ENCODE measurements at regions of chr5 and their contacts with region 1.

Region 1: DNA sequence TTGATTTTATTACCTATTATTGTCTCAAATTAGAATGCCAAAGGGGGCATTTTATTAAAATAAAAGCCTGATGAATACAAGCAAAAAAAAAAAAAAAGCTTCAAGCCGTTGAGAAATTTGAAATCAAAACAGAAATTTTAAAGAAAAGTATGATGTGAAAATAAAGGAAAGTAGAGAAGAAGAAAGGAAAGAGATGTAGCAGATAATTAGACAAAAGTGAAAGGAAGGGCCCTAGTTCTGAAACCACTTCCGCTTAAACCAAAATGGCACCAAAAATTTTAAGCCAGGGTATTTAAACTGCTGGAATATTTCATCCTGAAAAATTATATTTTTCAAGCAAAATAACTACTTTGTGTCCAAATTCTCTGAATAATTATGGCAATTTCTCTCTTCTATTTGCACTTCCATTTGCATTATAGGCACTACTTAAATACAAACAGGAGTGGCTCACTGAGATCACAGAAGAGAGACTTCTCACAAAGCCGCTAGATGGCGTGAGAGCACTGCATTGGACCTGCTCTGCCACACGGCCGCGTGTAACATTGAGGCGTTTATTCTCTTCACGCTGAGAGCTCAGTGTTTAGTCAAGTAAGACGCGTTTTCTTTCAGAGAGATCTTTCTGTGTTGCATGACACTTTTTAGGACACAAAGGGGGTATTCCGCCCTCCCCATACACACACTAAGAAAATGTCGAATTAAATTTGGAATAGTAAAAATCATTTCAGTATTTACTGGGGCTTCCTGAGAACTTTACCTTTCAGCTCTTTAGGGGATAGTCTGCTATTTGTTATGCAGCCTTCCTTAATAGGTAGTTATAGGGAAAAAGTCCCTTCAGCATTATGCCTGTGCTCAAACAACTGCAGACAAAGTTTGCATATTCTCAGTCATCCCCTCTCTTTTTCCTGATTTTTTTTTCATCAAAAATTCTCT is 368.4 kb upstream of the CCNH start:
- DNase-seq: peak; percentile 70
- ATAC-seq: peak; percentile 100
- H3K4me3 ChIP-seq: no peak overlapping the region
- H3K27ac ChIP-seq: no peak overlapping the region
- H3K4me1 ChIP-seq: no peaks in the 10 kb centered on the region
- H3K27me3 ChIP-seq: peaks cover 0 to 1% of the 10 kb centered on the region in 2 experiments; a peak in 1 of 5 replicates
- CTCF ChIP-seq: peak; percentile 94
- EP300 ChIP-seq: no peak
- POLR2A ChIP-seq: no peak
- RAD21 ChIP-seq: peak; percentile 84

Region 2: DNA sequence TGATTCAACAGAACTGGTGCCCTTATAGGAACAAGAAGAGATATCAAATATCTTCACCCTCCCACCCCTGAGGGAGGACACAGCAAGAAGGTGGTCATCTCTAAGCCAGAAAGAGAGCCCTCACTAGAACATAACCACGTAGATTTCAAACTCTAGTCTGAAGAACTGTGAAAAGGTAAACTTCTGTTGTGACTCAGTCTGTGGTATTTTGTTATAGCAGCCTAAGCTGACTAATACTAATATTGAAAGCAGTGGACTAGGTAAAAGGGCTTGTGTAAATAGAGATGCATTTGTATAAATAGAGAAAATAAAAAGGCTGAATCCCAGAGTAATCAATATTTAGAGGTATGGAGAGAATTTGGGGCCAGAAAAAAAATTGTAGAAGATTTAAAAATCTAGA is 210.7 kb before region 1 on chr5:
- CTCF ChIA-PET with region 1: no interaction called
- POLR2A ChIA-PET with region 1: no interaction called
- in situ Hi-C with region 1: no loop called
- intact Hi-C with region 1: no loop called
- DNase-seq: no peak
- ATAC-seq: no peak
- H3K4me3 ChIP-seq: no peak overlapping the region
- H3K27ac ChIP-seq: no peak overlapping the region
- H3K4me1 ChIP-seq: no peaks in the 10 kb centered on the region
- H3K27me3 ChIP-seq: no peaks in the 10 kb centered on the region; a peak in 1 of 5 replicates
- CTCF ChIP-seq: no peak
- EP300 ChIP-seq: no peak
- POLR2A ChIP-seq: no peak
- RAD21 ChIP-seq: no peak

Region 3: DNA sequence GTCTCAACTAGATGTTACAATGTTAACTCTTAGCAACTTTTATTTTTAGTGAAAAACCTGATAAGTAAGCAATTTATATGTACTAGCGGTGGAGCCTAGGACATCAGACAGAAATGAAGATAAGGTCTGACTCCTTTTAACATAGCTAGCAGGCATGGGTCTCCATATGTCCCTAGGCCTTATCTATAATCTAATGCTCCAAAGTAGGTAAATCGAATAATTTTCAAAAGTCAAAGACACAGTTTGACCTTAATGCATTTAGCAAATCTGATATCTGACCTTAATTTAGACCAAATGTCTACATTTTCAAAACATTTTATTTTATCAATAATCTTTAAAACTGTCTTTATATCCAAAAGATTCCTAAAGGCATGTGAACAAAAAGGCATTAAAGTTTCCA is 63.3 kb before region 1 on chr5:
- CTCF ChIA-PET with region 1: no interaction called
- POLR2A ChIA-PET with region 1: no interaction called
- in situ Hi-C with region 1: no loop called
- intact Hi-C with region 1: no loop called
- DNase-seq: no peak
- ATAC-seq: no peak
- H3K4me3 ChIP-seq: no peak overlapping the region
- H3K27ac ChIP-seq: no peak overlapping the region
- H3K4me1 ChIP-seq: no peaks in the 10 kb centered on the region
- H3K27me3 ChIP-seq: no peaks in the 10 kb centered on the region
- CTCF ChIP-seq: no peak
- EP300 ChIP-seq: no peak
- POLR2A ChIP-seq: no peak
- RAD21 ChIP-seq: no peak

Region 4: GRCh38 chr5:87807783-87808182 is 26.7 kb after region 1 on chr5:
- CTCF ChIA-PET with region 1: no interaction called
- POLR2A ChIA-PET with region 1: no interaction called
- in situ Hi-C with region 1: no loop called
- intact Hi-C with region 1: no loop called
- DNase-seq: no peak
- ATAC-seq: no peak
- H3K4me3 ChIP-seq: no peak overlapping the region
- H3K27ac ChIP-seq: no peak overlapping the region
- H3K4me1 ChIP-seq: no peaks in the 10 kb centered on the region
- H3K27me3 ChIP-seq: no peaks in the 10 kb centered on the region
- CTCF ChIP-seq: no peak
- EP300 ChIP-seq: no peak
- POLR2A ChIP-seq: no peak
- RAD21 ChIP-seq: no peak

Region 5: GRCh38 chr5:88190139-88190834 is 409.2 kb after region 1 on chr5:
- CTCF ChIA-PET with region 1: no interaction called
- POLR2A ChIA-PET with region 1: no interaction called
- in situ Hi-C with region 1: no loop called
- intact Hi-C with region 1: loop called (anchors 1 kb)
- DNase-seq: no peak
- ATAC-seq: no peak
- H3K4me3 ChIP-seq: no peak overlapping the region
- H3K27ac ChIP-seq: no peak overlapping the region
- H3K4me1 ChIP-seq: no peaks in the 10 kb centered on the region
- H3K27me3 ChIP-seq: no peaks in the 10 kb centered on the region
- CTCF ChIP-seq: peak; percentile 42
- EP300 ChIP-seq: no peak
- POLR2A ChIP-seq: no peak
- RAD21 ChIP-seq: no peak

Region 6: GRCh38 chr5:88680253-88681132 is 899.4 kb after region 1 on chr5:
- CTCF ChIA-PET with region 1: interaction called, 28 read pairs
- POLR2A ChIA-PET with region 1: no interaction called
- in situ Hi-C with region 1: loop called (anchors 5 kb)
- intact Hi-C with region 1: loop called (anchors 1 kb)
- DNase-seq: peak; percentile 13
- ATAC-seq: peak; percentile 97
- H3K4me3 ChIP-seq: peak overlapping the region; percentile 19 to 53 (median 40); a peak in 3 of 6 replicates
- H3K27ac ChIP-seq: no peak overlapping the region
- H3K4me1 ChIP-seq: no peaks in the 10 kb centered on the region
- H3K27me3 ChIP-seq: peaks cover 2 to 74% of the 10 kb centered on the region in 2 experiments; a peak in 4 of 5 replicates
- CTCF ChIP-seq: peak; percentile 93
- EP300 ChIP-seq: no peak
- POLR2A ChIP-seq: no peak
- RAD21 ChIP-seq: peak; percentile 94

Region 7: GRCh38 chr5:88690409-88691229 is 909.5 kb after region 1 on chr5:
- CTCF ChIA-PET with region 1: interaction called, 32 read pairs
- POLR2A ChIA-PET with region 1: no interaction called
- in situ Hi-C with region 1: loop called (anchors 5 kb)
- intact Hi-C with region 1: loop called (anchors 1 kb)
- DNase-seq: peak; percentile 7
- ATAC-seq: peak; percentile 91
- H3K4me3 ChIP-seq: no peak overlapping the region
- H3K27ac ChIP-seq: no peak overlapping the region
- H3K4me1 ChIP-seq: no peaks in the 10 kb centered on the region
- H3K27me3 ChIP-seq: peaks cover 7 to 85% of the 10 kb centered on the region in 2 experiments; a peak in 4 of 5 replicates
- CTCF ChIP-seq: peak; percentile 93
- EP300 ChIP-seq: no peak
- POLR2A ChIP-seq: no peak
- RAD21 ChIP-seq: peak; percentile 79

Region 8: GRCh38 chr5:88724201-88724600 is 943.1 kb after region 1 on chr5:
- CTCF ChIA-PET with region 1: interaction called, 10 read pairs
- POLR2A ChIA-PET with region 1: no interaction called
- in situ Hi-C with region 1: no loop called
- intact Hi-C with region 1: loop called (anchors 1 kb)
- DNase-seq: no peak
- ATAC-seq: no peak
- H3K4me3 ChIP-seq: no peak overlapping the region
- H3K27ac ChIP-seq: no peak overlapping the region
- H3K4me1 ChIP-seq: no peaks in the 10 kb centered on the region
- H3K27me3 ChIP-seq: 0 out of 5 replicates have a peak, but pooled peaks cover 0 to 6% of the 10 kb centered on the region in 2 experiments
- CTCF ChIP-seq: no peak
- EP300 ChIP-seq: no peak
- POLR2A ChIP-seq: no peak
- RAD21 ChIP-seq: no peak

Measured in HepG2 (cell line).